Posterior vena cava (tissue), 2 donors: ENCODE measurements at regions of chr2 and their contacts with region 1.

Region 1: DNA sequence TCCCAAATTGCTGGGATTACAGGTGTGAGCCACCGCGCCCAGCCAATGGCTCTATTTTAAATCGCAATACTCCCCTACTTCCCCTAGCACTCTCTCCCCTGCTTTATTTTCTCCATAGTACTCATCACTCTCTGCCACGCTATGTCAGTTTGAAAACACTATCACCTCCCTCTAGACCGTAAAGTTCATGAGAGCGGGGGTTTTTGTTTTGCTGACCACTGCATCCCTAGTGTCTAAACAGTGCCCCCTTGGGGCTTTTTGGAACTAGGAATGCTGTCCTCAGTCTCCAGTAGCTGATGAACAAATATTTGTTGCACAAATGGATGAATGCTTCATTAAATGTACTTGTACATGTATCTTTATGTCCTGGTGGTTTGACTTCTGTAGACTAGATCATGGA is 44.1 kb downstream of the ATOH8 start:
- DNase-seq: no peak

Region 2: DNA sequence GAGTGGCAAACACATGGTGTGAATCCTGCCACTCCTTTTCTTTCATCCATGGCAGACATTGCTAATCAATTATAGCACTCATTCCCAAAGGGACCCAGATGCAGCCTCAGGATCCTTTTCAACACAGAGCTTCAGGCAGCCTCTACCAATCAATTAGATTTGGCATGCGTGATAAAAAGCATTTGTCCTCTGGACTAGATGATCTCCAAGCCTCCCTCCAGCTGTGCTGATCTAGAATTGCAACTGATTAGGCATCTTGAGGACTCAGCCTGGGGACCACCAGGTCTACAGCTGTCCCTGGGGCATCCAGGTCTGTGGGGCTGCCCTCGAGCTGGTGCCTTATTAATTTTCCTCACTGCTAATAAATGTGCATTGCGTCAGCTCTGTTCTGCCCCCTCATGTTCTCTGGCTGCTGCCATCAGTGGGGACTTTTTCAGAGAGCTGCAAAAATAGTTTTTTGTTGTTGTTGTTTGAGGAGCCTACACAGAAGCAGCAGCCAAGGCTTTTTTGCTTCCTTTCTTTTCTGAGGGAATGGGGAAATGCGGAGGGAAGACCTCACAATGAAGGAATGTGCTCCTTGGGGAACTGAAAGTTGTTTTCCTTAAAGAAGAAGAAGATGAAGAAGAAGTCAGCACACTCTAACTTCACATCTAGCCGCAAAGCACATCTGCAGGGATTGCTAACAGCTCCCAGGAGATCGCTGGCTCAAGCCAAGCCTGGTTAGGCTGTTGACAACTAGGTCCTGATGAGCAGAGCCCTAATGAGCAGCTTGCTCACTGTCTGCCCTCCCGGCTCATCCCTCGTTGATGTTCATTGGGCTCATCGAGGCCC is 52.9 kb before region 1 on chr2:
- intact Hi-C with region 1: loop called (anchors 5 kb)
- DNase-seq: peak; percentile 80

Region 3: GRCh38 chr2:85750587-85751575 is 47.0 kb before region 1 on chr2:
- intact Hi-C with region 1: loop called (anchors 5 kb)
- DNase-seq: peak; percentile 90

Region 4: GRCh38 chr2:85826990-85827878 is 29.3 kb after region 1 on chr2:
- intact Hi-C with region 1: no loop called
- DNase-seq: peak; percentile 92

Region 5: DNA sequence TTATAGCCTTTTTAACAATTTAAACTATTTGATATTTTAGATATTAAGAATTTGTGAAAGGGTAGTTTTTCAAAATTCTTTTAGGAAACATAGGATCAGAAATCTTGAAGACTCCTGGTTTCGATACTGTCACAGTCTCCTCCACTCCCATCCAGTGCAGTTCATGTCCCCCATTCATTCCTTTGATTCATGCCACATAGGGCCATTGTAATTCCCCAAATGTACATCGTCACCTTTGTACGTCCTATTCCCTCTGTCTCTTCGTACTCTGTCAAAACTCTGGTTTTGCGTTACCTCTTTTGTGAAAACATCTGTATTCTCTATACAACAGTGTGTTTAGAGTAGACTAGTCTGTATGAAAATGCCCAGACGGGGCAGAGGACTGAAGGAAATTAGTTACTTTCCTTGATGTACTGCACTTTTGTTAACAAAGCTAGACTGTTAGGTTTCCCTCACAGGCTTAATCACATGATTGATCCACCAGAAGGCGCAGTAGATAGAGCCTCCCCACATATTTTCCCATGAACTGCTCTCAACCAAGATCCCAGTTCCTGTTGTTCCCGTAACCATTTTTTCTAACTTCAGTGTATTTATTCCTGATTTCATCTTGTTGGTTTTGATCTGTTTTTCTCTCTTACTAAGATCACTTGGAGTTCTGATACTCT is 403.9 kb after region 1 on chr2:
- intact Hi-C with region 1: no loop called
- DNase-seq: no peak